Pancreas (tissue), 10 donors: ENCODE measurements at regions of chr5 and their contacts with region 1.

Region 1: GRCh38 chr5:160787240-160787639 is 64.8 kb downstream of the ATP10B start:
- DNase-seq: peak; percentile 38 to 63 (median 47)
- ATAC-seq: peak; percentile 77 to 99 (median 98)
- H3K4me3 ChIP-seq: no peak overlapping the region
- H3K27ac ChIP-seq: no peak overlapping the region
- H3K4me1 ChIP-seq: no peaks in the 10 kb centered on the region
- H3K27me3 ChIP-seq: no peaks in the 10 kb centered on the region
- CTCF ChIP-seq: peak; percentile 20 to 47 (median 37)

Region 2: DNA sequence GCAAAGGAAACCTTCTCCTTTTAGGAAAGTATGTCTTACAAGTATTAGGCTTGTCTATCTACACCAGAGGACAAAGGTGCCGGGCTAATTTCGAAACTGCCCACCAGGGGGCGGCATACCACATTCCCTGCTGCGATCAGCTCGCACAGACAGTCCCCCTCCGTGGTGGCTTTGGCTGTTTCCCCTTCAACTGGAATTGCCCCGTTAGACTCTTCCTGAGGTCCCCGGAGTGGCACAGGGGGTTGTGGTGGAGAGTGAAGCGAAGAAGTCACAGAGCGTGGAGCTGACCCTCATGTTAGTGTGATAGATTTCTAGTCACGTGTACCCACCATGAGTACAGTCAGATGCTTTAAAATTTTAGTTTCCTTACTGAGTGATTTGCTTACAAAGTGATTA is 348.0 kb before region 1 on chr5:
- intact Hi-C with region 1: loop called in 1 of 3 experiments (anchors 10 kb)
- DNase-seq: peak; percentile 71 to 97 (median 85)
- ATAC-seq: peak; percentile 93 to 98 (median 96)
- H3K4me3 ChIP-seq: peak overlapping the region in 3 of 4 donors; percentile 13 to 39 (median 14)
- H3K27ac ChIP-seq: peak overlapping the region in 2 of 4 donors; percentile 39 to 69
- H3K4me1 ChIP-seq: peaks cover 0 to 6% (median 5%) of the 10 kb centered on the region in 3 donors
- H3K27me3 ChIP-seq: no peaks in the 10 kb centered on the region
- CTCF ChIP-seq: peak; percentile 89 to 96 (median 92)

Region 3: GRCh38 chr5:160508780-160509361 is 278.4 kb before region 1 on chr5:
- intact Hi-C with region 1: loop called in 1 of 3 experiments (anchors 10 kb)
- DNase-seq: peak in 4 of 6 donors; percentile 29 to 73 (median 44)
- ATAC-seq: peak; percentile 86 to 96 (median 94)
- H3K4me3 ChIP-seq: no peak overlapping the region
- H3K27ac ChIP-seq: no peak overlapping the region
- H3K4me1 ChIP-seq: no peaks in the 10 kb centered on the region
- H3K27me3 ChIP-seq: no peaks in the 10 kb centered on the region
- CTCF ChIP-seq: peak; percentile 66 to 86 (median 82)